Activated naive CD4-positive, alpha-beta T cell treated with anti-CD3 and anti-CD28 coated beads for 36 hours (primary cell): ENCODE measurements at regions of chr6 and their contacts with region 1.

Region 1: DNA sequence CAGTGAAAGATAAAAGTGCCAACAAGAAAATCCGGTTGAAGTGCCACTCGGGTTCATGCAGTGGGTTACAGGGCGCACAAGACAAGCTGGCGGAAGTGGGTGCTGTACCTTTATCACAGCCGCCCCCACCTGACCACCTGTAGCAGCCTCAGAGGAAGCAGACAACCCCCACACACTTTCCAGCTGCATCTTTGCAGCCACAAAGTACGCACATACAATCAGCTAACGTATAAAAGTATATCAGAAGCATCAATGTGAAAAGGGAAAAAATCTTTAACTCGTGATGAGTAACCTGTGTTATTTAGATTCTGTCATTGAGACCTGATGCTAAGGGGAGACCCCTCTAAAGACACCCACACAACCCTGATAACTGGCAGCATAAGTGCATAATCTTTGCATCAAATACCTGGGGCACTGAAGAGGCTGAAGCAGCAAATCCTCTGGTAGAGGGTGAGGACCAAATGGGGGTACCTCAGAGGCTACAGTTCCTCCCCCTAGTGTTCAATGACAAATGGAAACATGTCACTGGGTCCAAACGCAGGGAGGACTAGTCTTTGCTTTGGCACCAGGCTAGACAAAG is 22.1 kb downstream of the BACH2 start:
- DNase-seq: peak; percentile 96
- H3K4me3 Mint-ChIP-seq: peak overlapping the region; percentile 36
- H3K27ac Mint-ChIP-seq: peak overlapping the region; percentile 97
- H3K4me1 Mint-ChIP-seq: peaks cover 91% of the 10 kb centered on the region
- H3K27me3 Mint-ChIP-seq: no peaks in the 10 kb centered on the region

Region 2: GRCh38 chr6:89952686-89953085 is 321.9 kb before region 1 on chr6:
- CTCF ChIA-PET with region 1: no interaction called
- intact Hi-C with region 1: loop called (anchors 5 kb)
- DNase-seq: peak; percentile 70
- H3K4me3 Mint-ChIP-seq: no peak overlapping the region
- H3K27ac Mint-ChIP-seq: peak overlapping the region; percentile 75
- H3K4me1 Mint-ChIP-seq: peaks cover 74% of the 10 kb centered on the region
- H3K27me3 Mint-ChIP-seq: no peaks in the 10 kb centered on the region

Region 3: DNA sequence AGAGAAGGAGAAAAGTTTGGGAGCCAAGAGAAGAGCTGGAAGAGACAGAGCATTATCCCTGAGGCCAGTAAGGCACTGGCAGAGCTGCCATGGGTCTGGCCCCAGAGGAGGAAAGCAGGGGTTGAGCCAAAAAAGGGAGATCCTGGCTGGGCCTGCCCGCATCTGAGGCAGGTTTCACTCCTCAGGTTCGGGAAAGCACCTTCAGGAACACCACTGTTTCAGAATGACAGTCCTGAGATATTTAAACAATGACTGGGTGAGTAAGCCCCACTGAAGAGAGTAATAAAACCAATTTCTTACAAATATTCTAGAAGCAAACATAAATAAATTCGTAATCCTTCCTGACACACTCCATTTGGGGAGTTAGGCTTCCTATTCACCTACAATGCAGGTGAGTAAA is 130.1 kb before region 1 on chr6:
- CTCF ChIA-PET with region 1: no interaction called
- intact Hi-C with region 1: loop called (anchors 1 kb)
- DNase-seq: peak; percentile 84
- H3K4me3 Mint-ChIP-seq: peak overlapping the region; percentile 49
- H3K27ac Mint-ChIP-seq: peak overlapping the region; percentile 91
- H3K4me1 Mint-ChIP-seq: peaks cover 88% of the 10 kb centered on the region
- H3K27me3 Mint-ChIP-seq: no peaks in the 10 kb centered on the region

Region 4: GRCh38 chr6:90216072-90216977 is 58.2 kb before region 1 on chr6:
- CTCF ChIA-PET with region 1: interaction called, 14 read pairs
- intact Hi-C with region 1: loop called (anchors 1 kb)
- DNase-seq: peak; percentile 76
- H3K4me3 Mint-ChIP-seq: peak overlapping the region; percentile 14
- H3K27ac Mint-ChIP-seq: no peak overlapping the region
- H3K4me1 Mint-ChIP-seq: peaks cover 32% of the 10 kb centered on the region
- H3K27me3 Mint-ChIP-seq: no peaks in the 10 kb centered on the region

Region 5: GRCh38 chr6:90296346-90297114 is 22.0 kb after region 1 on chr6 and contains the start of gene BACH2:
- CTCF ChIA-PET with region 1: interaction called, 3 read pairs
- intact Hi-C with region 1: loop called (anchors 1 kb)
- DNase-seq: peak; percentile 99
- H3K4me3 Mint-ChIP-seq: peak within 1 kb of the TSS; percentile 86
- H3K27ac Mint-ChIP-seq: peak within 1 kb of the TSS; percentile 97
- H3K4me1 Mint-ChIP-seq: peaks cover 41% of the 10 kb centered on the region
- H3K27me3 Mint-ChIP-seq: peaks cover 2% of the 10 kb centered on the region
- total RNA-seq, gene BACH2: 75.1 to 77.9 TPM

Region 6: GRCh38 chr6:90458353-90459224 is 184.0 kb after region 1 on chr6:
- CTCF ChIA-PET with region 1: interaction called, 5 read pairs
- intact Hi-C with region 1: loop called (anchors 1 kb)
- DNase-seq: peak; percentile 95
- H3K4me3 Mint-ChIP-seq: peak overlapping the region; percentile 66
- H3K27ac Mint-ChIP-seq: peak overlapping the region; percentile 99
- H3K4me1 Mint-ChIP-seq: peaks cover 89% of the 10 kb centered on the region
- H3K27me3 Mint-ChIP-seq: no peaks in the 10 kb centered on the region

Region 7: DNA sequence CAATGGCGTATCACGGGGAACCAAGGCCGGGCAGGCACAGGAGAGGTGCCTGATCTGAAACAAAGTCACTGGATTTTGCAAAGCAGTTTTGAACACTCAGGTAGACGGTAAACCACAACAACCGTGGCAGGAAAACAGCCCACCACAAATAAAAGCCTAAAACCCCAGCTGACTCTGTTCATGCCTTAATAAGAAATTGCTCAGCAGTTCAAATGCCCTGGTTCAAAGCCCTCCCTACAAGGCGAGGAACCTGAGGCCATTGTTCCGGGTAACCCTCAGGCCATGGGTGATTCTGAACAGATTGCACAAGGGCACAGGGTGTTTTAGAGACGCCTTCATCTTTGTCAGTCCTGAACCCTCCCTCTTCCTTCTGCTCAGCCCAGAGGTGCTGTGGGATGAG is 198.2 kb after region 1 on chr6:
- CTCF ChIA-PET with region 1: interaction called, 3 read pairs
- intact Hi-C with region 1: loop called (anchors 1 kb)
- DNase-seq: peak; percentile 61
- H3K4me3 Mint-ChIP-seq: peak overlapping the region; percentile 48
- H3K27ac Mint-ChIP-seq: peak overlapping the region; percentile 92
- H3K4me1 Mint-ChIP-seq: peaks cover 86% of the 10 kb centered on the region
- H3K27me3 Mint-ChIP-seq: no peaks in the 10 kb centered on the region